ENCODE measurements at regions of chr11 and their contacts with region 1.

Region 1: GRCh38 chr11:73095613-73096012 is 46.5 kb downstream of the FCHSD2 start:
- DNase-seq: no peak
- ATAC-seq: no peak
- H3K4me3 ChIP-seq: no peak overlapping the region
- H3K4me3 Mint-ChIP-seq: peak overlapping the region in 1 of 10 donors; percentile 2
- H3K27ac ChIP-seq: no peak overlapping the region
- H3K27ac Mint-ChIP-seq: peak overlapping the region in 4 of 9 donors; percentile 6 to 56 (median 26)
- H3K4me1 ChIP-seq: no peaks in the 10 kb centered on the region
- H3K4me1 Mint-ChIP-seq: peaks cover 13 to 46% (median 39%) of the 10 kb centered on the region in 7 donors
- H3K27me3 ChIP-seq: no peaks in the 10 kb centered on the region
- H3K27me3 Mint-ChIP-seq: no peaks in the 10 kb centered on the region

Region 2: DNA sequence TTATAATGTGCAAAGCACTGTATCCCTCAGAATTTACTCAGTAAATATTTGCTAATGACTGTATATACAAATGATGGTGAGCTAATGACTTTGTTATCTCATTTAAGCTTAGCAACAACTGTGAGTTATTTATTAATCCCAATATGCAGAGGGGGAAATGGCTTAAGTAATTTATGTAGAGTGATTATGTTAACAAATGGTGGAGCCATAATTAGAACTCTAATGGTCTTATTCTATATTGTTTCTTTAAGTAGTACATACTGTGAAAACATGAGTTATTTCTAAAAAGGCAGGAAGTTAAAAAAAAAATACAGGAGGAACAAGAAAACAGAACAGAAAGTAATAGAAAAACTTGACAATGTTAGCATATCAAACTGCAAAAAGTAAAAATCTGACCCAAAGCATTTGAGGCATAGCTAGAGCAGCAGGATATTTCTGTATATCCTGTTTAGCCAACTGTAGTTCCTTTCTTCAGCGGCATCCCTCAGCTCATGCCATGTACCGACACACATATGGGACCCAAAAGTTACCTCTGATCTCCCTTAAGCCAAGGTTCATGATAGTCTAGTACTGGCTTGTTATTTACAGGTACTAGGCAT is 47.7 kb before region 1 on chr11:
- CTCF ChIA-PET with region 1: no interaction called
- POLR2A ChIA-PET with region 1: no interaction called
- intact Hi-C with region 1: loop called in 1 of 2 experiments (anchors 10 kb)
- DNase-seq: peak in 1 of 9 donors; percentile 0
- ATAC-seq: peak; percentile 38
- H3K4me3 ChIP-seq: no peak overlapping the region
- H3K4me3 Mint-ChIP-seq: peak overlapping the region in 9 of 10 donors; percentile 6 to 86 (median 72)
- H3K27ac ChIP-seq: peak overlapping the region; percentile 6
- H3K27ac Mint-ChIP-seq: peak overlapping the region; percentile 29 to 85 (median 62)
- H3K4me1 ChIP-seq: peaks cover 0 to 15% of the 10 kb centered on the region in 2 donors
- H3K4me1 Mint-ChIP-seq: peaks cover 19 to 39% (median 27%) of the 10 kb centered on the region in 7 donors
- H3K27me3 ChIP-seq: no peaks in the 10 kb centered on the region
- H3K27me3 Mint-ChIP-seq: no peaks in the 10 kb centered on the region

Measured in naive thymus-derived CD4-positive, alpha-beta T cell (primary cell).